GM10248 (cell line): ENCODE measurements at regions of chr2 and their contacts with region 1.

Region 1: GRCh38 chr2:179253226-179253625 is 11.4 kb downstream of the SESTD1 start:
- DNase-seq: no peak
- CTCF ChIP-seq: no peak

Region 2: GRCh38 chr2:179263446-179264367 is 10.5 kb after region 1 on chr2:
- CTCF ChIA-PET with region 1: interaction called, 11 read pairs
- POLR2A ChIA-PET with region 1: no interaction called
- DNase-seq: peak; percentile 37
- CTCF ChIP-seq: no peak